Gastrocnemius medialis (tissue), 4 donors: ENCODE measurements at regions of chr1 and their contacts with region 1.

Region 1: GRCh38 chr1:202998836-202999750 is 8.1 kb upstream of the TMEM183A start:
- DNase-seq: peak; percentile 22 to 31
- ATAC-seq: peak in 1 of 2 donors; percentile 27
- H3K4me3 ChIP-seq: no peak overlapping the region
- H3K27ac ChIP-seq: no peak overlapping the region
- H3K4me1 ChIP-seq: no peaks in the 10 kb centered on the region
- H3K27me3 ChIP-seq: peaks cover 3 to 8% (median 4%) of the 10 kb centered on the region in 3 donors
- CTCF ChIP-seq: peak; percentile 74 to 86 (median 81)
- POLR2A ChIP-seq: no peak

Region 2: DNA sequence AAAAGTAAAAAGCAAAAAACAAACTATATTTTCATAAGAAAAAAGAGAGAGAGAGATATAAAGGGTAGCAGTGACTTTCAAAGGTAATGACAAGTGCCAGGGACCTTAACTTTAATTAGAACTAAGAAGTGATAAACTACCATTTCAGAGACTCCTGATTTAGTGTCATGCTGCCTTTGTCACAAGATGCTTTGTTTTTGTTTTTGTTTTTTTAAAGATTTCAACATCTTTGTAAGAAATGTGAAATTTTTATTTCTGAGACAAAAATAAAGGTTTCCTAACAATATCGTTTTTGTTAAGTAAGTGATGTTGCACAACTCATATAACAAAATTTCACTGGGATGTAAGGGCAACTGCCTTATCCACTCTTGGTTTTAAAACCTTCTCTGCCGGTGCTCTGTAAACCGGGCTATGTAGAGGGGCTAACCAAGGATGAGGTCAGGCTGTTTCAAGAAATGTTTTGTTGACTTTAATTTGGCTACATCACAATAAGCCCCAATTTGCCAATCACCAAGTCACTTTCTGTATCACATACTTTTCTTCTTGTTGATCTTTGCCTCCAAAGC is 253.7 kb before region 1 on chr1:
- in situ Hi-C with region 1: loop called in 3 of 4 experiments (anchors 10 to 25 kb)
- intact Hi-C with region 1: no loop called
- DNase-seq: no peak
- ATAC-seq: no peak
- H3K4me3 ChIP-seq: no peak overlapping the region
- H3K27ac ChIP-seq: no peak overlapping the region
- H3K4me1 ChIP-seq: no peaks in the 10 kb centered on the region
- H3K27me3 ChIP-seq: no peaks in the 10 kb centered on the region
- CTCF ChIP-seq: no peak
- POLR2A ChIP-seq: no peak

Region 3: GRCh38 chr1:202750758-202751157 is 248.3 kb before region 1 on chr1:
- in situ Hi-C with region 1: loop called in 3 of 4 experiments (anchors 10 to 25 kb)
- intact Hi-C with region 1: no loop called
- DNase-seq: no peak
- ATAC-seq: no peak
- H3K4me3 ChIP-seq: no peak overlapping the region
- H3K27ac ChIP-seq: no peak overlapping the region
- H3K4me1 ChIP-seq: no peaks in the 10 kb centered on the region
- H3K27me3 ChIP-seq: no peaks in the 10 kb centered on the region
- CTCF ChIP-seq: no peak
- POLR2A ChIP-seq: no peak

Region 4: DNA sequence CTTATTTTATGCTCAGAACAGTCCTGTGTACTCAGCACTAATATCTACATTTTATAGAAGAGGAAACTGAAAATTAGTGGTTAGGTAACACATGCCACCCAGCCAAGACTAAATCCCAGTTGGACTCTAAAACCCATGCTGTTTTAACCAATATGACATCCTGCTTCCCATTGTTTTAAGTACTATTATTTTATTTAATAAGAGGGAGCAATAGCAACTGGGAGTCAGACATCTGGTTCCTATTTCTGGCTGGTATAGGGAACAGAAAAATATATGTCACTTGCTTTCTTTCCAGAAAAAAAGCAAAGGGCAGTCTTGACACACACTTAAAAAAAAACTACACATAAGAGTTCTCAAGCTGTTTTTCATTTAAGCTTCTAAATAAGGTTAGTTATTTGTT is 83.9 kb before region 1 on chr1:
- in situ Hi-C with region 1: no loop called
- intact Hi-C with region 1: no loop called
- DNase-seq: no peak
- ATAC-seq: no peak
- H3K4me3 ChIP-seq: no peak overlapping the region
- H3K27ac ChIP-seq: no peak overlapping the region
- H3K4me1 ChIP-seq: no peaks in the 10 kb centered on the region
- H3K27me3 ChIP-seq: no peaks in the 10 kb centered on the region
- CTCF ChIP-seq: no peak
- POLR2A ChIP-seq: no peak

Region 5: DNA sequence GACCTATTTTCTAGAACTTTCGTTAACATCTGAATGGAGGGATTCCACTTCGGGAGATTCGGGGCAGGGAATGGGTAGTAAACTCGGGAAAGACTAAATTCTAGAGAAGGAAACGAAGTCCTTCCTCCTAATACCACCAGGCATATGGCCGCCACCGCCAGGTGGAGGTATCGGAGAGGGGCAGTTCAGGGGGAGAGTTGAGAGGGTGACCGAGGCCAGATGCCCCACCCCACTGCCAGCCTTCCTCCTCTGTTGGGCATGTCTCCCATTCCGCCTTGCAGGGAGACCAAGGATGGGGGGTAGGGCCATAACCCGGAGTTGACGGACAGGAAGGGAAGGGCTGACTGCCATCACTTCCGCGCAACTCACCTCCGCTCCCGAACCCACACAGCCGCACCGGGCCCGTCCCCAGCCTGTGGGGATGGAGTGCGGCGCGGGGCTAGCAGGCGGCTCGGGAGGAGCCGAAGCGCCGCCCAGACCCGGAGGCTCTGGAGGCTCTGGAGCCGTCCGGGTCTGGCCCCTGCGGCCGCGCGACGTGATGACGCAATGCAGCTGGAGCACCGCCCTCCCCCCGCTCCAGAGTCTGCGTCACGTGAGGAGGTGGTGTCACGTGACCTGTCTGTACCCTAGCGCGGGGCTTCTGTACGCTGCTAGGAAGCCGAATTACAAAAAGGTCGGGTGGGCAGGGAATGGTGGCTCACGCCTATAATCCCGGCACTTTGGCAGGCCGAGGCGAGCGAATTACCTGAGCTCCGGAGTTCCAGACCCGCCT is 72.2 kb before region 1 on chr1 and contains the start of gene KLHL12:
- in situ Hi-C with region 1: loop called (anchors 5 to 10 kb)
- intact Hi-C with region 1: loop called (anchors 1 kb)
- DNase-seq: peak; percentile 94
- ATAC-seq: peak; percentile 94 to 97
- H3K4me3 ChIP-seq: peak within 1 kb of the TSS; percentile 75 to 100 (median 88)
- H3K27ac ChIP-seq: peak within 1 kb of the TSS; percentile 92 to 98 (median 94)
- H3K4me1 ChIP-seq: peaks cover 14 to 30% of the 10 kb centered on the region in 2 donors
- H3K27me3 ChIP-seq: no peaks in the 10 kb centered on the region
- CTCF ChIP-seq: peak; percentile 79 to 84 (median 81)
- POLR2A ChIP-seq: peak; percentile 78 to 83
- total RNA-seq, gene KLHL12: 12.1 to 24.0 (median 12.6) TPM

Region 6: GRCh38 chr1:202938287-202938925 is 60.7 kb before region 1 on chr1:
- in situ Hi-C with region 1: loop called in 1 of 4 experiments (anchors 10 kb)
- intact Hi-C with region 1: no loop called
- DNase-seq: no peak
- ATAC-seq: no peak
- H3K4me3 ChIP-seq: no peak overlapping the region
- H3K27ac ChIP-seq: no peak overlapping the region
- H3K4me1 ChIP-seq: no peaks in the 10 kb centered on the region
- H3K27me3 ChIP-seq: no peaks in the 10 kb centered on the region
- CTCF ChIP-seq: no peak
- POLR2A ChIP-seq: no peak